CD4-positive, alpha-beta memory T cell (primary cell): ENCODE measurements at regions of chr15 and their contacts with region 1.

Region 1: DNA sequence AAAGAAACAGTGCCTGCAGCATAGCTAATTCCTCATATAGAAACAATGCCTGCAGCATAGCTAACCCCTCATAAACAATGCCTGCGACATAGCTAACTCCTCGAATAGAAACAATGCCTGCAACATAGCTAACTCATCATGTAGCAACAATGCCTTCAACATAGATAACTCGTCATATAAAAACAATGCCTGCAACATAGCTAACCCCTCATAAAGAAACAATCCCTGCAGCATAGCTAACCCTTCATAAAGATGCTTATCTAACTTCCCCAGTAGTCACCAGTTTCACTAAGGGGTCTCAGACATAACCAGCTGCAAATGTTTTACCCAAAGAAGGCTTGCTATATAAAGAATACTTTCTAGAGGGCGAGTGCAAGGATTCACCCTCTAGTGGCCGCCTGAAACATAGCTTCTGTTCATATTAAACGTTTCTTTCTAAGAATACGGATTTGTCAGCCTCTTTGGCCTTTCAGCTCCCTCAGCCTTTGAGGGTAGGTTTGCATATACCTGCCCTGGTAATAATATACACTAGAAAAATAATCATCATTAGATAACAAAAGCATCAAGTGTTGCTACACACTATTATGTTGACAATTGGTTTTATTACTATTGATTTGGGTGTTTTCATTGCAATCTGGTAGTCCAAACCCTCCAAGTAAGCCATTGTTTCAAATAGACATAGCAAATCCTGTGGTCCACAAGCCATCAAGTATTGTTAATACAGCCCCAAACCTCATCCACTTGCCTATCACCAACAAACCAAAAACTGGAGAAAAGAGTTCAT is 44.4 kb upstream of the FAN1 start:
- DNase-seq: peak in 3 of 5 donors; percentile 20 to 27 (median 26)
- H3K4me3 ChIP-seq: no peak overlapping the region
- H3K4me3 Mint-ChIP-seq: no peak overlapping the region
- H3K27ac ChIP-seq: no peak overlapping the region
- H3K27ac Mint-ChIP-seq: no peak overlapping the region
- H3K4me1 ChIP-seq: no peaks in the 10 kb centered on the region
- H3K4me1 Mint-ChIP-seq: peaks cover 0 to 9% (median 0%) of the 10 kb centered on the region in 4 donors
- H3K27me3 ChIP-seq: no peaks in the 10 kb centered on the region
- H3K27me3 Mint-ChIP-seq: no peaks in the 10 kb centered on the region

Region 2: GRCh38 chr15:30791239-30792175 is 67.8 kb before region 1 on chr15:
- CTCF ChIA-PET with region 1: interaction called, 13 read pairs
- POLR2A ChIA-PET with region 1: no interaction called
- intact Hi-C with region 1: no loop called
- DNase-seq: no peak
- H3K4me3 ChIP-seq: no peak overlapping the region
- H3K4me3 Mint-ChIP-seq: no peak overlapping the region
- H3K27ac ChIP-seq: no peak overlapping the region
- H3K27ac Mint-ChIP-seq: no peak overlapping the region
- H3K4me1 ChIP-seq: no peaks in the 10 kb centered on the region
- H3K4me1 Mint-ChIP-seq: no peaks in the 10 kb centered on the region
- H3K27me3 ChIP-seq: no peaks in the 10 kb centered on the region
- H3K27me3 Mint-ChIP-seq: peaks cover 1 to 19% of the 10 kb centered on the region in 2 donors

Region 3: GRCh38 chr15:30816430-30816829 is 42.9 kb before region 1 on chr15:
- CTCF ChIA-PET with region 1: no interaction called
- POLR2A ChIA-PET with region 1: no interaction called
- intact Hi-C with region 1: no loop called
- DNase-seq: no peak
- H3K4me3 ChIP-seq: no peak overlapping the region
- H3K4me3 Mint-ChIP-seq: peak overlapping the region in 3 of 8 donors; percentile 7 to 33 (median 29)
- H3K27ac ChIP-seq: no peak overlapping the region
- H3K27ac Mint-ChIP-seq: no peak overlapping the region
- H3K4me1 ChIP-seq: no peaks in the 10 kb centered on the region
- H3K4me1 Mint-ChIP-seq: peaks cover 0 to 2% (median 0%) of the 10 kb centered on the region in 4 donors
- H3K27me3 ChIP-seq: no peaks in the 10 kb centered on the region
- H3K27me3 Mint-ChIP-seq: no peaks in the 10 kb centered on the region

Region 4: GRCh38 chr15:30827625-30828288 is 31.5 kb before region 1 on chr15:
- CTCF ChIA-PET with region 1: interaction called, 11 read pairs
- POLR2A ChIA-PET with region 1: no interaction called
- intact Hi-C with region 1: no loop called
- DNase-seq: no peak
- H3K4me3 ChIP-seq: no peak overlapping the region
- H3K4me3 Mint-ChIP-seq: no peak overlapping the region
- H3K27ac ChIP-seq: no peak overlapping the region
- H3K27ac Mint-ChIP-seq: peak overlapping the region in 3 of 7 donors; percentile 8 to 63 (median 54)
- H3K4me1 ChIP-seq: peaks cover 4% of the 10 kb centered on the region
- H3K4me1 Mint-ChIP-seq: peaks cover 0 to 36% (median 17%) of the 10 kb centered on the region in 4 donors
- H3K27me3 ChIP-seq: no peaks in the 10 kb centered on the region
- H3K27me3 Mint-ChIP-seq: no peaks in the 10 kb centered on the region

Region 5: GRCh38 chr15:30903497-30904201 is 44.4 kb after region 1 on chr15 and contains the start of gene FAN1:
- CTCF ChIA-PET with region 1: interaction called, 12 read pairs
- POLR2A ChIA-PET with region 1: no interaction called
- intact Hi-C with region 1: no loop called
- DNase-seq: peak; percentile 67 to 76 (median 71)
- H3K4me3 ChIP-seq: peak within 1 kb of the TSS; percentile 50 to 83
- H3K4me3 Mint-ChIP-seq: peak within 1 kb of the TSS; percentile 93 to 98 (median 96)
- H3K27ac ChIP-seq: peak within 1 kb of the TSS; percentile 32
- H3K27ac Mint-ChIP-seq: peak within 1 kb of the TSS; percentile 48 to 90 (median 82)
- H3K4me1 ChIP-seq: peaks cover 11% of the 10 kb centered on the region
- H3K4me1 Mint-ChIP-seq: peaks cover 18 to 42% (median 29%) of the 10 kb centered on the region in 4 donors
- H3K27me3 ChIP-seq: no peaks in the 10 kb centered on the region
- H3K27me3 Mint-ChIP-seq: no peaks in the 10 kb centered on the region
- total RNA-seq, gene FAN1: 25.9 TPM